Activated CD8-positive, alpha-beta T cell treated with anti-CD3 and anti-CD28 coated beads for 36 hours (primary cell): ENCODE measurements at regions of chr17 and their contacts with region 1.

Region 1: GRCh38 chr17:27601069-27601975 is 29.7 kb upstream of the LGALS9 start:
- DNase-seq: peak; percentile 89
- ATAC-seq: peak; percentile 53
- H3K4me3 Mint-ChIP-seq: no peak overlapping the region
- H3K27ac Mint-ChIP-seq: no peak overlapping the region
- H3K4me1 Mint-ChIP-seq: peaks cover 5% of the 10 kb centered on the region
- H3K27me3 Mint-ChIP-seq: no peaks in the 10 kb centered on the region
- CTCF ChIP-seq: peak; percentile 85

Region 2: DNA sequence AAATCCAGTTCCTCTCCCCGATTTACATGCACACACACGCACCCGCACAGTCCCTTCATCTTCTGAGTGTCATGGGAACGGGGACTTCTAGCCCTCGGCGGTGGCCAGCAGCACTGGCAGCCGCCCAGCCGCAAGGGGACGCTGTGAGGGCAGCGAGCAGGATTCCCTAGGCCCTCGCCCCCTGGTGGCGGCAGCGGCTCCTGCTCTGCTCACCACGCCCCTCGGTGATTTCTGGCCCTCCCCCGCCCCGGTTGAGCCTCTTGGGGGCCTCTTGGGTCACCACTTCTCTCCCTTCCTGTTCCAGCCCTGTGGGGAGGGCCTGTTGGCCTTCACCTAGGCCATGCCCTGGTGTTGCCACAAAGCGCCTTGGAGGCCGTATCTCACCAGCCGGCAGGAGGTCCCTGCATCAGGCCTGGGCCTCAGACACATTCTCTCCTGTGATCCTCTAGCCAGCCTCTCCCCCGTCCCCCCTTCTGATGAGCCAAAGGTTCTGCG is 220.3 kb before region 1 on chr17:
- CTCF ChIA-PET with region 1: interaction called, 161 read pairs
- POLR2A ChIA-PET with region 1: no interaction called
- intact Hi-C with region 1: loop called (anchors 5 kb)
- DNase-seq: peak; percentile 91
- ATAC-seq: peak; percentile 98
- H3K4me3 Mint-ChIP-seq: no peak overlapping the region
- H3K27ac Mint-ChIP-seq: no peak overlapping the region
- H3K4me1 Mint-ChIP-seq: no peaks in the 10 kb centered on the region
- H3K27me3 Mint-ChIP-seq: peaks cover 11% of the 10 kb centered on the region
- CTCF ChIP-seq: peak; percentile 100

Region 3: GRCh38 chr17:27455914-27456680 is 145.2 kb before region 1 on chr17 and contains the start of gene KSR1:
- CTCF ChIA-PET with region 1: interaction called, 39 read pairs
- POLR2A ChIA-PET with region 1: interaction called, 4 read pairs
- intact Hi-C with region 1: loop called (anchors 5 kb)
- DNase-seq: peak; percentile 88
- ATAC-seq: peak; percentile 93
- H3K4me3 Mint-ChIP-seq: peak within 1 kb of the TSS; percentile 94
- H3K27ac Mint-ChIP-seq: peak within 1 kb of the TSS; percentile 85
- H3K4me1 Mint-ChIP-seq: peaks cover 38% of the 10 kb centered on the region
- H3K27me3 Mint-ChIP-seq: peaks cover 3% of the 10 kb centered on the region
- CTCF ChIP-seq: peak; percentile 24
- total RNA-seq, gene KSR1: 53.9 to 58.2 TPM

Region 4: DNA sequence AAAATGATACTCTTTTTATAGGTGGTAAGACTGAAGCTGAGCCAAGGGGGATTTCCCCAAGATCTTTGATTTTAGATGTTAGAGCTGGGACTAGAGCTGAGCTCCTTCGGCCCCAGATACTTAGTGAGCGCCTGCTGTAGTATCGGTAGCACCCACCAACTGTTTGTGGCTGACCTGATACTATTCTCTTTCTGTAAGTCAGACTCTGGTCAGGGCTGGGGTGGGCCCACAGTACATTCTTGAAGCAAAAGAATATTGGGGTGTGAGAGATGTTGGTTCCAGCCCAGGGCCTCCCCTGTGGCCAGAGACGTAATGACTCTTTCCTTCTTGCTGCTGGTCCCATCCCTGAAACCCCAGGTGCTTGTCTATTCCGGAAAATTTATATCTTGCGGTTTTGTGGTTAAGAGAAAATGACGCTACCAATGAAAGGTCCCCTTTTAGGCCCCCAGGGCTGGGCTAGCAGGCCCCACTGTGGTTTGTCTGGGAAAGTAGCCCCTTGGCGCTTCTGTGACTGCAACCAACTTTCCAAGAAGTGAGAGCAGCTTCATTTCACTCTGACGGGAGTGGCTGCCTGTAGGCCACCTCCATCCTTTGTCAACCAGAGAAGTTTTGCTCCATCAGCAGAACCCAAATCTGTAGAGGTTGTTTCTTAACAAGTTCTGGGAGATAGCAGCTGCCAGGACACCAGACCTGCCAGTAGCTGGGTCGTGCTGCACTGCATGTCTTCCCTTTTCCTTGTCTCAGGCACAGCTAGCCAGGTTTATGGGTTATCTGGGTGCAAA is 56.8 kb before region 1 on chr17:
- CTCF ChIA-PET with region 1: interaction called, 26 read pairs
- POLR2A ChIA-PET with region 1: interaction called, 4 read pairs
- intact Hi-C with region 1: no loop called
- DNase-seq: peak; percentile 96
- ATAC-seq: peak; percentile 86
- H3K4me3 Mint-ChIP-seq: peak overlapping the region; percentile 67
- H3K27ac Mint-ChIP-seq: peak overlapping the region; percentile 89
- H3K4me1 Mint-ChIP-seq: peaks cover 65% of the 10 kb centered on the region
- H3K27me3 Mint-ChIP-seq: peaks cover 2% of the 10 kb centered on the region
- CTCF ChIP-seq: no peak

Region 5: GRCh38 chr17:27569257-27569722 is 32.0 kb before region 1 on chr17:
- CTCF ChIA-PET with region 1: interaction called, 96 read pairs
- POLR2A ChIA-PET with region 1: no interaction called
- intact Hi-C with region 1: no loop called
- DNase-seq: peak; percentile 87
- ATAC-seq: peak; percentile 72
- H3K4me3 Mint-ChIP-seq: no peak overlapping the region
- H3K27ac Mint-ChIP-seq: peak overlapping the region; percentile 69
- H3K4me1 Mint-ChIP-seq: peaks cover 76% of the 10 kb centered on the region
- H3K27me3 Mint-ChIP-seq: no peaks in the 10 kb centered on the region
- CTCF ChIP-seq: peak; percentile 75

Region 6: DNA sequence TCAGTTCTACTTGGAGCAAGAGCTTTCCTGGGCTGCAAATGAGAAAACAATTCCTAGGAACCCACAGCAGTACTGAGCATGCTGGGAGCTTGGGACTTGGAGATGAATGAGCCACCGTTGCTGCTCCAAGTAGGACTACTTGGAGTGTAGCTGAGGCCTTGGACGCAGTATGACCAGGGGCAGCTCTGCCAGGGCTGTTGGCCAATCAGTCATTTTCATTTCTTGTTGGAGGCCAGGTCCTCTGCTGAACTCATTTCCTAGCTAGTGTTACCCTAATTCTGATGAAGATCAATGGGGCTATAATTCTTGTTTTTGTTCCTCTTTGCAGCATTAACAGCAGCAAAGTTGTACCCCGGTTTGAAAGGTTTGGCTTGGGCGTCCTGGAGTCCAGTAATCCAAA is 21.7 kb after region 1 on chr17:
- CTCF ChIA-PET with region 1: interaction called, 109 read pairs
- POLR2A ChIA-PET with region 1: interaction called, 3 read pairs
- intact Hi-C with region 1: no loop called
- DNase-seq: no peak
- ATAC-seq: no peak
- H3K4me3 Mint-ChIP-seq: no peak overlapping the region
- H3K27ac Mint-ChIP-seq: no peak overlapping the region
- H3K4me1 Mint-ChIP-seq: peaks cover 12% of the 10 kb centered on the region
- H3K27me3 Mint-ChIP-seq: no peaks in the 10 kb centered on the region
- CTCF ChIP-seq: no peak